IMR-90 (cell line): ENCODE measurements at regions of chr11 and their contacts with region 1.

Region 1: DNA sequence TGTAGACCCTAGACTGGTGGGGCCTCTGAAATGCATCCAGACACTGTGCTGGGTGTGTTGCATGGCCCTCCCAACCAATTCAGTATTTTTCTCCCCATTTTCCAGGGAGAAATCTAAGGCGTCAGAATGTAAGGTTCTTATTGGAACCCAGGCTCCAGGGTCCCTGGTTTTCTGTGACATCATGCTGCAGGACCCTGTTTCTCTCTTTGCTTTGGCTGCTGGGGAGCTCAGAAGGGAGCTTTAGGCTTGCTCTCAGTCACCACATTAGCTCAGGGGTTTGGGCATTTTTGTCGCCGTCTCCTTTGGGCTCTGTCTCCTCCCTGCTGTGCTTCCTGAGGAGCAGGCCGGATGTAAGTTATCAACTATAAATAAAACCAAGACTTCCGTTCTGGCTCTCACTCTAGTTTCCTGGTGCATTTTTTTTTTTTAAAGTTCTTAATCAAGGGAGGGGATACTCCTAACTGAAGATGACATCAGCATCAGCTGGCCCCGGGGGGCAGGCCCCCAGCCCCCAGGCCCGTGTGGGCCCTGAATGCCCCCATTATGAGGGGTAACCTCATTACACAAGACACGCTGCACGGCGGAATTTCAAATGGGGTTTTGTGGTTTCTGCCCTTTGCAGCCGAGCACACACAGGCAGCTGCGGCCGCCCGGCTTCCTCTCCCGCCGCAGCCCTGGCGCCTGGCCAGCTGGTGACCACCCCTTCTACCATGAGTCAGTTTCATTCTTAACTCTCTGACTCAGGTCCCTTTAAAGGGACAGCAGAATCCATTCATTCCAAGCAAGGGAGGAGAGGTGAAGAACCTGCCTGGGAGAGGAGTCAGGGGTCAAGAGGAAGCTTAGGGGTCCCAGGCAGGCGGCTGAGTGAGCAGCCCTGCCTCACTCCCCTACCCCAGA is 3.2 kb downstream of the MYEOV start:
- DNase-seq: peak; percentile 99
- ATAC-seq: peak; percentile 59
- H3K4me3 ChIP-seq: no peak overlapping the region
- H3K27ac ChIP-seq: peak overlapping the region; percentile 92
- H3K4me1 ChIP-seq: peaks cover 47% of the 10 kb centered on the region
- H3K27me3 ChIP-seq: no peaks in the 10 kb centered on the region
- CTCF ChIP-seq: no peak
- POLR2A ChIP-seq: no peak
- RAD21 ChIP-seq: peak; percentile 33; the same call in 1 of the 2 replicates

Region 2: DNA sequence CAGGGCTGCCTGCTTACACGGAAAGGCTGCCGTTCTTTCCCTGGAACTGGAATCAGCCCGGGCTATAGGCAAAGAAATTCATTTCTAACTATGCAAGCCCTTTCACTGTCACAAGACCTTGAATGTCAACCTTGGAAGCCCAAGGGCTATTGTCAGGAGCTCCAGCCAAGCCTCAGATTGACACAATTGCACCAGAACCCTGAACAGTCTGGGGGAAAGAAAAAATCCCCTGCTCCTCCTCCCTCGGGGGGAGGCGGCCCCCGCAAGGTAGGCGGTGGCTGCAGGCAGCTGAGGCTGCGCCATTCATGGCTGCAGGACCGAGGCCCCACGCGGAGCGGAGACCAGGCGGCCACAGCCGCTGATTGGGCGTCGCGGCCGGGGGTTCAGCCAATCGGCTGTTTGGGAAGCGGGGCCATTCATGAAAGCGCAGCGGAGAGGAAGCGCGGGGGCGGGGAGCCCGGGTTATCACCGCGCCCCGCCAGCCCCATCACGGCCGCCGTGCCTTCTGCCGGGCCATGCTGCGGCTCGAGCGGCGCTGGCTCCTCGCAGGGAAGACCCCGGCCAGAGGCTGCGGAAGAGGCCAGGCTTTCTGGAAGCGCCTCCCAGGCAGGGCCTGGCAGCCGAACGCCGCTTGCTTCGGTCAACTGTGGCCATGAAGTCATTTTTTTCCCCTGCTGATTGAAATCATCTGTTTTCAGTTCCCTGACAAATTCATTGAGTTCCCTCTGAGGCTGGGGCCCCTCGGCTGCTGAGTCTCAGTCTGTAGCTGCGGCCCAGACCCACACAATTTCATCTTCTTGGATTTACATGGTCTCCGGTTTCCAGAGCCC is 146.2 kb after region 1 on chr11:
- CTCF ChIA-PET with region 1: no interaction called
- POLR2A ChIA-PET with region 1: interaction called, 4 read pairs
- dilution Hi-C with region 1: no loop called
- in situ Hi-C with region 1: no loop called
- intact Hi-C with region 1: loop called (anchors 1 kb)
- DNase-seq: peak; percentile 94
- ATAC-seq: peak; percentile 93
- H3K4me3 ChIP-seq: peak overlapping the region; percentile 36
- H3K27ac ChIP-seq: peak overlapping the region; percentile 95
- H3K4me1 ChIP-seq: peaks cover 27% of the 10 kb centered on the region
- H3K27me3 ChIP-seq: no peaks in the 10 kb centered on the region
- CTCF ChIP-seq: no peak
- POLR2A ChIP-seq: peak; percentile 84
- RAD21 ChIP-seq: no peak; the same call in 1 of the 2 replicates

Region 3: GRCh38 chr11:69750875-69751597 is 453.9 kb after region 1 on chr11:
- CTCF ChIA-PET with region 1: no interaction called
- POLR2A ChIA-PET with region 1: no interaction called
- dilution Hi-C with region 1: no loop called
- in situ Hi-C with region 1: no loop called
- intact Hi-C with region 1: no loop called
- DNase-seq: no peak
- ATAC-seq: no peak
- H3K4me3 ChIP-seq: no peak overlapping the region
- H3K27ac ChIP-seq: no peak overlapping the region
- H3K4me1 ChIP-seq: no peaks in the 10 kb centered on the region
- H3K27me3 ChIP-seq: peaks cover 33% of the 10 kb centered on the region
- CTCF ChIP-seq: no peak
- POLR2A ChIP-seq: no peak
- RAD21 ChIP-seq: no peak